Naive thymus-derived CD4-positive, alpha-beta T cell (primary cell): ENCODE measurements at regions of chr19 and their contacts with region 1.

Region 1: GRCh38 chr19:45692187-45693105 is at the start of gene QPCTL:
- DNase-seq: peak; percentile 76 to 99 (median 97)
- ATAC-seq: peak; percentile 93
- H3K4me3 ChIP-seq: peak within 1 kb of the TSS; percentile 90
- H3K4me3 Mint-ChIP-seq: peak within 1 kb of the TSS; percentile 89 to 99 (median 97)
- H3K27ac ChIP-seq: peak within 1 kb of the TSS; percentile 89
- H3K27ac Mint-ChIP-seq: peak within 1 kb of the TSS; percentile 94 to 98 (median 96)
- H3K4me1 ChIP-seq: peaks cover 7 to 15% of the 10 kb centered on the region in 2 donors
- H3K4me1 Mint-ChIP-seq: peaks cover 13 to 38% (median 22%) of the 10 kb centered on the region in 7 donors
- H3K27me3 ChIP-seq: no peaks in the 10 kb centered on the region
- H3K27me3 Mint-ChIP-seq: peaks cover 0 to 2% (median 0%) of the 10 kb centered on the region in 5 donors
- total RNA-seq, gene QPCTL: 6.1 to 8.9 (median 7.9) TPM

Region 2: DNA sequence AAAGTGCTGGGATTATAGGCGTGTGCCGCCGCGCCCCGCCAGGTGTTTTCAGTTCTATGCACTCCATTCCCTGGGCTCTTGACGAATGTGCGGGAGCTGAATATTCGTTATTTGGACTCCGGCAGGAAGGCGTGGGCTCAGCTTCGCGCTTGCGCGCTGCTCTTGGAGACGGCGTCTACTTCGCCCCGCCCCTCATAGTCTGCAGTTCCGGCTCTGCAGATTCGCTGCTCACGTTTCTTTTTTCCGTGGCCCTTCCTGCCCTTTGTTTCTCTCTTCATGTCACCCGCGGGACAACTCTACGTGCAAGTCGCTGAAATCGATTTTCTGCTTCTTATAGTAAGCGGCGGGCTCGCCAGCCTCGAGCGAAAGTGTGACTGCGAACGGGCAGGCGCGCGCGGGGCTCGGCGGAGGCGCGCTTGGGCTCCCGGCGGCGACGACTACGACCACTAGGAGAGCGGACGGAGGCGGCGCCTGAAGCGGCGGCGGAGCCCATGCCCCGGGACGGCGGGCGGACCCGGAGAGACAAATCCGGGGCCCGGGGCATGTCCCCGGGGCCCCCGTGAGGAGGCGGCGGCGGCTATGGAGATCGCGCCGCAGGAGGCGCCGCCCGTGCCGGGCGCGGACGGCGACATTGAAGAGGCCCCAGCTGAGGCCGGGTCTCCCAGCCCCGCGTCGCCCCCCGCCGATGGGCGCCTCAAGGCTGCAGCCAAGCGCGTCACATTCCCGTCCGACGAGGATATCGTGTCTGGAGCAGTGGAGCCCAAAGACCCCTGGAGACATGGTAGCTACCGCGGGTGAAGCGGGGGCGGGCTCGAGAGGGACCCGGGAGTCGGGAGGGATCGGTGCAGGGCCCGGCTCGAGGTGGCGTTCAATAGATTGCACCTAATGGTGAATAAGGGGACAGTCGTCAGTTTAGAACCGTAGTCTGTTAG is 599.4 kb before region 1 on chr19 and contains the start of gene PPP1R37:
- CTCF ChIA-PET with region 1: no interaction called
- POLR2A ChIA-PET with region 1: no interaction called
- intact Hi-C with region 1: loop called in 1 of 2 experiments (anchors 2 kb)
- DNase-seq: peak; percentile 81 to 97 (median 92)
- ATAC-seq: peak; percentile 85
- H3K4me3 ChIP-seq: peak within 1 kb of the TSS; percentile 75
- H3K4me3 Mint-ChIP-seq: peak within 1 kb of the TSS; percentile 87 to 99 (median 96)
- H3K27ac ChIP-seq: peak within 1 kb of the TSS; percentile 90
- H3K27ac Mint-ChIP-seq: peak within 1 kb of the TSS; percentile 96 to 100 (median 98)
- H3K4me1 ChIP-seq: peaks cover 33 to 46% of the 10 kb centered on the region in 2 donors
- H3K4me1 Mint-ChIP-seq: peaks cover 56 to 81% (median 60%) of the 10 kb centered on the region in 7 donors
- H3K27me3 ChIP-seq: no peaks in the 10 kb centered on the region
- H3K27me3 Mint-ChIP-seq: no peaks in the 10 kb centered on the region
- total RNA-seq, gene PPP1R37: 20.0 to 28.3 (median 21.9) TPM

Region 3: GRCh38 chr19:45439569-45440254 is 252.7 kb before region 1 on chr19:
- CTCF ChIA-PET with region 1: no interaction called
- POLR2A ChIA-PET with region 1: no interaction called
- intact Hi-C with region 1: loop called in 1 of 2 experiments (anchors 5 kb)
- DNase-seq: peak; percentile 75 to 95 (median 86)
- ATAC-seq: peak; percentile 72
- H3K4me3 ChIP-seq: peak overlapping the region; percentile 57
- H3K4me3 Mint-ChIP-seq: peak overlapping the region; percentile 68 to 83 (median 77)
- H3K27ac ChIP-seq: peak overlapping the region; percentile 69
- H3K27ac Mint-ChIP-seq: peak overlapping the region in 4 of 9 donors; percentile 51 to 91 (median 74)
- H3K4me1 ChIP-seq: peaks cover 24% of the 10 kb centered on the region in 2 donors
- H3K4me1 Mint-ChIP-seq: peaks cover 26 to 35% (median 33%) of the 10 kb centered on the region in 7 donors
- H3K27me3 ChIP-seq: no peaks in the 10 kb centered on the region
- H3K27me3 Mint-ChIP-seq: peaks cover 0 to 5% (median 0%) of the 10 kb centered on the region in 5 donors

Region 4: DNA sequence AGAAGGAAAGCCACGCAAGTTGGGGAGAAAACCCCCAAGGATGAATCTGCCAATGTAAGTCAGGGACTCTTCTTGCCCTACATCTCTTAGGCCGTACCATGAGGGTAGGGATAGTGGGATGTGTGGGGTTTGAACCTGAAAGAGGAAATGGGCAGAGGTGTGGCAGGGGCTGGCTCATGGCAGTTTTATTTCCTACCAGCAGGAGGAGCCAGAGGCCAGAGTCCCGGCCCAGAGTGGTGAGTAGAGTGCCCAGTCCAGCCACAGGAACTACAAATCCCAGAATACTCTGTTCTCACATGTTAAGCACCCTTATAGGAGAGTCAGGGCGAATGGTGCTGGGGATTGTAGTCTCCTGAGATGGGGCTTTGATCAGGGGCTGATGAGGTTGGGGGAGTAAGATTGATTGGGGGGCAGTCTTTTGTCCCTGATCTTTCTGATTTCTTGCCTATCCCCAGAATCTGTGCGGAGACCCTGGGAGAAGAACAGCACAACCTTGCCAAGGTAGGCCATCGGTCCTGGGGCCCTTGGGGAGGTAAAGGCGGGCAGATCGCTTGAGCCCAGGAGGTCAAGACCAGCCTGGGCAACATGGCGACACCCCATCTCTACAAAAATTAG is 168.7 kb before region 1 on chr19:
- CTCF ChIA-PET with region 1: no interaction called
- POLR2A ChIA-PET with region 1: no interaction called
- intact Hi-C with region 1: loop called (anchors 1 kb)
- DNase-seq: peak; percentile 54 to 85 (median 83)
- ATAC-seq: peak; percentile 100
- H3K4me3 ChIP-seq: no peak overlapping the region
- H3K4me3 Mint-ChIP-seq: no peak overlapping the region
- H3K27ac ChIP-seq: no peak overlapping the region
- H3K27ac Mint-ChIP-seq: peak overlapping the region in 8 of 9 donors; percentile 26 to 88 (median 65)
- H3K4me1 ChIP-seq: no peaks in the 10 kb centered on the region
- H3K4me1 Mint-ChIP-seq: peaks cover 11 to 24% (median 17%) of the 10 kb centered on the region in 7 donors
- H3K27me3 ChIP-seq: no peaks in the 10 kb centered on the region
- H3K27me3 Mint-ChIP-seq: no peaks in the 10 kb centered on the region

Region 5: GRCh38 chr19:45681391-45682015 is 10.9 kb before region 1 on chr19:
- CTCF ChIA-PET with region 1: interaction called, 17 read pairs
- POLR2A ChIA-PET with region 1: interaction called, 18 read pairs
- intact Hi-C with region 1: loop called (anchors 1 kb)
- DNase-seq: peak; percentile 76 to 94 (median 87)
- ATAC-seq: peak; percentile 92
- H3K4me3 ChIP-seq: peak overlapping the region; percentile 48
- H3K4me3 Mint-ChIP-seq: peak overlapping the region; percentile 74 to 88 (median 80)
- H3K27ac ChIP-seq: peak overlapping the region; percentile 37
- H3K27ac Mint-ChIP-seq: peak overlapping the region in 8 of 9 donors; percentile 43 to 87 (median 75)
- H3K4me1 ChIP-seq: peaks cover 13 to 16% of the 10 kb centered on the region in 2 donors
- H3K4me1 Mint-ChIP-seq: peaks cover 7 to 22% (median 20%) of the 10 kb centered on the region in 7 donors
- H3K27me3 ChIP-seq: no peaks in the 10 kb centered on the region
- H3K27me3 Mint-ChIP-seq: peaks cover 0 to 4% (median 0%) of the 10 kb centered on the region in 5 donors

Region 6: GRCh38 chr19:45792470-45793177 is 100.2 kb after region 1 on chr19 and contains the start of gene DMWD:
- CTCF ChIA-PET with region 1: no interaction called
- POLR2A ChIA-PET with region 1: no interaction called
- intact Hi-C with region 1: loop called (anchors 1 to 2 kb)
- DNase-seq: peak; percentile 95 to 99 (median 98)
- ATAC-seq: peak; percentile 98
- H3K4me3 ChIP-seq: peak within 1 kb of the TSS; percentile 61
- H3K4me3 Mint-ChIP-seq: peak within 1 kb of the TSS; percentile 84 to 93 (median 88)
- H3K27ac ChIP-seq: peak within 1 kb of the TSS; percentile 15
- H3K27ac Mint-ChIP-seq: peak within 1 kb of the TSS; percentile 45 to 93 (median 85)
- H3K4me1 ChIP-seq: peaks cover 25 to 28% of the 10 kb centered on the region in 2 donors
- H3K4me1 Mint-ChIP-seq: peaks cover 31 to 44% (median 41%) of the 10 kb centered on the region in 7 donors
- H3K27me3 ChIP-seq: peaks cover 0 to 8% of the 10 kb centered on the region in 2 donors
- H3K27me3 Mint-ChIP-seq: peaks cover 6 to 76% (median 37%) of the 10 kb centered on the region in 5 donors
- total RNA-seq, gene DMWD: 18.7 to 43.2 (median 35.4) TPM

Region 7: GRCh38 chr19:45994989-45995714 is 302.7 kb after region 1 on chr19 and contains the start of gene CCDC61:
- CTCF ChIA-PET with region 1: no interaction called
- POLR2A ChIA-PET with region 1: no interaction called
- intact Hi-C with region 1: loop called in 1 of 2 experiments (anchors 1 kb)
- DNase-seq: peak; percentile 82 to 100 (median 99)
- ATAC-seq: peak; percentile 97
- H3K4me3 ChIP-seq: peak within 1 kb of the TSS; percentile 73
- H3K4me3 Mint-ChIP-seq: peak within 1 kb of the TSS in 3 of 10 donors; percentile 9 to 64 (median 34)
- H3K27ac ChIP-seq: peak within 1 kb of the TSS; percentile 84
- H3K27ac Mint-ChIP-seq: peak within 1 kb of the TSS in 1 of 9 donors; percentile 72
- H3K4me1 ChIP-seq: peaks cover 5% of the 10 kb centered on the region in 2 donors
- H3K4me1 Mint-ChIP-seq: peaks cover 12 to 25% (median 18%) of the 10 kb centered on the region in 7 donors
- H3K27me3 ChIP-seq: no peaks in the 10 kb centered on the region
- H3K27me3 Mint-ChIP-seq: peaks cover 0 to 13% (median 5%) of the 10 kb centered on the region in 5 donors
- total RNA-seq, gene CCDC61: 15.5 to 35.8 (median 25.3) TPM